MCF 10A (cell line): ENCODE measurements at regions of chr1 and their contacts with region 1.

Region 1: GRCh38 chr1:205523891-205524793 is 19.7 kb downstream of the CDK18 start:
- DNase-seq: peak; percentile 95
- H3K4me3 Mint-ChIP-seq: no peak overlapping the region
- H3K27ac Mint-ChIP-seq: no peak overlapping the region
- H3K4me1 Mint-ChIP-seq: no peaks in the 10 kb centered on the region
- H3K27me3 Mint-ChIP-seq: no peaks in the 10 kb centered on the region
- CTCF ChIP-seq: peak; percentile 99

Region 2: DNA sequence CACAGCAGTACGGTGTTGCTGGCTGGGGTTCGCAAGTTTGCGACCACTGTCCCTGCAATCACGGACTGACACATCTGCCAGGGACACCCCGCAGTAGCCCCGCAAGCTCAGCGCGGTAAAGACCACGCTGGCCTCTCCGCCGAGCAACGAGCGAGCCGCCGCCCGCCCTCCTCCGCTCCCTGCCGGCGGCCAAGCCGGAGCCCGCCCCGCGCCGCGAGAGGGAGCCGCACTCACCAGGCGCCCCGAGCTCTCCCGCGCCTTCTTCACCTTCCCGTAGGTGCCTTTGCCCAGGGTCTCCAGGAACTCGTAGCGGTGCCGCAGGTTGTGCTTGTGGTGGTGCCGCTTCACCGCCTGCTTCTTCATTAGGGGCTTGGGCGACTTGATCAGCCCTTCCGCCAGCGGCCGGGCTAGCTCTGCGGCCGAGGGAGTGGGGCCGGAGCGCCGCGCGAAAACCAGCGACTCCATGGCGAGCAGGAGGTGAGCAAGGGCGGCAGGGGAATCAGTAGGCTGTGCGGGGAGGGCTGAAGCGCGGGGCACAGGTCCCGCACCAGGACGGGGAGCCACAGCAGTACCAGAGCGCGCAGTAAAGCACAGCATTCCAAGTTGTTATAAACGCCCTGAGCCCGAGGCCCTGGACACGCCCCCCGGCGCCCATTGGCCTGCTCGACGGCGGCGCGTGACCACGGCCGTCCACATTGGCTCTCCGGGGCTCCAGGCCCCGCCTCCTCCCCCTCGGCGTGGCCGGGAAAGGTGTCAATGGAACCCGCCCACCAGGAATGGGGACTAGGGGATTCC is 202.8 kb before region 1 on chr1 and contains the start of gene NUAK2:
- CTCF ChIA-PET with region 1: interaction called, 26 read pairs
- POLR2A ChIA-PET with region 1: no interaction called
- intact Hi-C with region 1: no loop called
- DNase-seq: peak; percentile 97
- H3K4me3 Mint-ChIP-seq: peak within 1 kb of the TSS; percentile 99
- H3K27ac Mint-ChIP-seq: peak within 1 kb of the TSS; percentile 54
- H3K4me1 Mint-ChIP-seq: peaks cover 56% of the 10 kb centered on the region
- H3K27me3 Mint-ChIP-seq: no peaks in the 10 kb centered on the region
- CTCF ChIP-seq: peak; percentile 64
- total RNA-seq, gene NUAK2: 2.8 and 6.0 TPM in 2 replicates

Region 3: GRCh38 chr1:205382561-205382960 is 141.6 kb before region 1 on chr1:
- CTCF ChIA-PET with region 1: interaction called, 50 read pairs
- POLR2A ChIA-PET with region 1: interaction called, 3 read pairs
- intact Hi-C with region 1: no loop called
- DNase-seq: no peak
- H3K4me3 Mint-ChIP-seq: no peak overlapping the region
- H3K27ac Mint-ChIP-seq: no peak overlapping the region
- H3K4me1 Mint-ChIP-seq: no peaks in the 10 kb centered on the region
- H3K27me3 Mint-ChIP-seq: no peaks in the 10 kb centered on the region
- CTCF ChIP-seq: no peak

Region 4: DNA sequence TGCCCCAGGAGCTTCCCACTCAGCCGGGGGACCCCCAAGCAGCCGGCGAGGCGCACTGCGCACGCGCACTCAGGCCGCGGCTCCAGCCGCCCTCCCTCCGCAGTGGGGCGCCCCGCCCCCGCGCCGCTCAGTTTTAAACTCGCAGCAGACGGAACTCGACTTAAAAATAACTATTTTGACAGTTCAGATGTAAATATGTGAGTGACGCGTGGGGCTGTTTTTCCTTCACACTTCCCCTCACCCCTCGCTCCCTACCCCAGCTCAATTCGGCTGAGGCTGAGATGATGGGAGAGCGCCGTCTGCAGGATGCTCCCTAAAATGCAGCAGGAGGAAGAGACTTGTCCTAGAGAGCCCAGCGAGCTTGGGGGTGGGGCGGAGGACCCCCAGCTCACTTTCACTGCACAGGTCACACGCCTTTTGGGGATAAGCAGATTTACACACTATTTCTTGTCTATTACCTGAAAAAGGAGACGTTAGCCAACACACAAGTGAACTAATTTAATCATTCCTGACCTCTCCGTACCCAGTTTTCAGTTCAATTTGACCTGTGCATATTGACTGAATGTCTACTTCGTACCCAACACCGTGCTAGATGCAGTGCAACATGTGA is 93.3 kb before region 1 on chr1:
- CTCF ChIA-PET with region 1: interaction called, 41 read pairs
- POLR2A ChIA-PET with region 1: no interaction called
- intact Hi-C with region 1: no loop called
- DNase-seq: peak; percentile 50
- H3K4me3 Mint-ChIP-seq: peak overlapping the region; percentile 56
- H3K27ac Mint-ChIP-seq: no peak overlapping the region
- H3K4me1 Mint-ChIP-seq: no peaks in the 10 kb centered on the region
- H3K27me3 Mint-ChIP-seq: peaks cover 56% of the 10 kb centered on the region
- CTCF ChIP-seq: peak; percentile 89

Region 5: GRCh38 chr1:205504311-205504984 is 19.7 kb before region 1 on chr1 and contains the start of gene CDK18:
- CTCF ChIA-PET with region 1: interaction called, 1,608 read pairs
- POLR2A ChIA-PET with region 1: interaction called, 15 read pairs
- intact Hi-C with region 1: no loop called
- DNase-seq: peak; percentile 95
- H3K4me3 Mint-ChIP-seq: peak within 1 kb of the TSS; percentile 89
- H3K27ac Mint-ChIP-seq: peak within 1 kb of the TSS; percentile 87
- H3K4me1 Mint-ChIP-seq: peaks cover 32% of the 10 kb centered on the region
- H3K27me3 Mint-ChIP-seq: no peaks in the 10 kb centered on the region
- CTCF ChIP-seq: no peak
- total RNA-seq, gene CDK18: 4.9 and 6.8 TPM in 2 replicates

Region 6: DNA sequence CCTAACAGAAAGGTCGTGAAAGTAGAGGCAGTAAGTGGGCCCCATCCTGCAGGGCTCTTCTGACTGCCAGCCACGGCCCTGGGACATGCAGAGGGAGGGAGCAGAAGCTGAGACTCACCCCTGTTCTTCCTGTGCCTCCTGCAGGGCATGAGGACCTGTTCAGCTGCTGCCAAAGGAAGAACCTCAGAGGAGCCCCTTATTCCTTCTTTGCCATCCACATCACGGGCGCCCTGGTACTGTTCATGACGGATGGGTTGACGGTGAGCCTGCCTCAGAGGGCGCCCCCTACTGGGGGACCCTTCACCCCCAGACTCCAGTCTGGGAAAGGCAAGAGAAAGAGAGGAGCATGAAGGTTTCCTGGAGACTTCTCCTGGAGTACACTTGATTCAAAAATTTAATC is 60.6 kb after region 1 on chr1:
- CTCF ChIA-PET with region 1: interaction called, 23 read pairs
- POLR2A ChIA-PET with region 1: interaction called, 3 read pairs
- intact Hi-C with region 1: no loop called
- DNase-seq: no peak
- H3K4me3 Mint-ChIP-seq: no peak overlapping the region
- H3K27ac Mint-ChIP-seq: no peak overlapping the region
- H3K4me1 Mint-ChIP-seq: peaks cover 8% of the 10 kb centered on the region
- H3K27me3 Mint-ChIP-seq: peaks cover 29% of the 10 kb centered on the region
- CTCF ChIP-seq: peak; percentile 65

Region 7: GRCh38 chr1:206415942-206416341 is 891.8 kb after region 1 on chr1:
- CTCF ChIA-PET with region 1: no interaction called
- POLR2A ChIA-PET with region 1: no interaction called
- intact Hi-C with region 1: no loop called
- DNase-seq: no peak
- H3K4me3 Mint-ChIP-seq: no peak overlapping the region
- H3K27ac Mint-ChIP-seq: no peak overlapping the region
- H3K4me1 Mint-ChIP-seq: peaks cover 14% of the 10 kb centered on the region
- H3K27me3 Mint-ChIP-seq: no peaks in the 10 kb centered on the region
- CTCF ChIP-seq: no peak